Activated T-helper 2 cell treated with anti-CD3 and anti-CD28 coated beads, Interferon-gamma antibody, Interleukin-2, Interleukin-4, amounts not matched to agents 10 μg/mL and 5 μg/mL and 100 μg/mL, durations not matched to agents 14 hours and 24 hours and 36 hours (primary cell): ENCODE measurements at regions of chr2 and their contacts with region 1.

Region 1: GRCh38 chr2:232418466-232419244 is 12.0 kb downstream of the ALPG start:
- DNase-seq: no peak
- H3K4me3 Mint-ChIP-seq: peak overlapping the region; percentile 51
- H3K27ac Mint-ChIP-seq: no peak overlapping the region
- H3K4me1 Mint-ChIP-seq: peaks cover 6% of the 10 kb centered on the region
- H3K27me3 Mint-ChIP-seq: peaks cover 54% of the 10 kb centered on the region

Region 2: DNA sequence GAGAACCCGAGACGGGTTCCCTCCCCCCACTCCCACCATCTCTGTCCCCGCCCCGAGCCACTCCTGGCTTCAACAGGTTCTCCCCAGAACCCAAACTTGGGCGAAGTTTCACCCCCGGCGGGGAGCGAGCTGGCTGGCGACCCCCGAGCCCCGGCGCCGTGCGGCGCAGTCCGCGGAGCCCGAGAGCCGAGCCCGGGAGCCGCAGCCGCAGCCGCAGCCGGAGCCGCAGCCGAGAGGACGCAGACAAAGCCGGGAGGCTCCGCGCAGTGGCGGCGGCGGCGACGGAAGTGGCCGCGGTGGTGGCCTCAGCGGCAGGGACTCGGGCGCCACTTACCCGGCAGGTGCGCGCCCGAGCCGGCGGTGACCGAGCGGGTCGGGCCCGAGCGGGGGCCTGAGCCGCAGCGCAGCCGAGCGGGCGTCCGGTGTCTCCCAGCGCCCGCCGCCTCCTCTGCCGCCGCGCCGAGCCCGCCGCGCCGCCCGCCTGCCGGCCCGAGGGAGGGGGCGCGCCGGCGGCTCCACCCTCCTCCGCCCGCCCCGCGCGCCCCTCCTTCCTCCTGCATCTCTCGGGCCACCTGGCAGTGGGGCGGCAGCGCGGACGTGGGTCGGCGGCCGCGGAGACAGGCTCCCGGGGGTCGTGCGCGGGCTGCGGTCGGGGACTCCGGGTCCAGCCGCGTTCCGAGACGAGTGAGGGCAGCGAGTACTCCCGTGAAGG is 68.9 kb after region 1 on chr2 and contains the start of gene ECEL1:
- intact Hi-C with region 1: loop called (anchors 10 kb)
- DNase-seq: no peak
- H3K4me3 Mint-ChIP-seq: no peak within 1 kb of the TSS
- H3K27ac Mint-ChIP-seq: no peak within 1 kb of the TSS
- H3K4me1 Mint-ChIP-seq: no peaks in the 10 kb centered on the region
- H3K27me3 Mint-ChIP-seq: peaks cover 37% of the 10 kb centered on the region
- total RNA-seq, gene ECEL1: 0.50 and 0.78 TPM in 2 replicates